ENCODE measurements at regions of chr9 and their contacts with region 1.

Region 1: DNA sequence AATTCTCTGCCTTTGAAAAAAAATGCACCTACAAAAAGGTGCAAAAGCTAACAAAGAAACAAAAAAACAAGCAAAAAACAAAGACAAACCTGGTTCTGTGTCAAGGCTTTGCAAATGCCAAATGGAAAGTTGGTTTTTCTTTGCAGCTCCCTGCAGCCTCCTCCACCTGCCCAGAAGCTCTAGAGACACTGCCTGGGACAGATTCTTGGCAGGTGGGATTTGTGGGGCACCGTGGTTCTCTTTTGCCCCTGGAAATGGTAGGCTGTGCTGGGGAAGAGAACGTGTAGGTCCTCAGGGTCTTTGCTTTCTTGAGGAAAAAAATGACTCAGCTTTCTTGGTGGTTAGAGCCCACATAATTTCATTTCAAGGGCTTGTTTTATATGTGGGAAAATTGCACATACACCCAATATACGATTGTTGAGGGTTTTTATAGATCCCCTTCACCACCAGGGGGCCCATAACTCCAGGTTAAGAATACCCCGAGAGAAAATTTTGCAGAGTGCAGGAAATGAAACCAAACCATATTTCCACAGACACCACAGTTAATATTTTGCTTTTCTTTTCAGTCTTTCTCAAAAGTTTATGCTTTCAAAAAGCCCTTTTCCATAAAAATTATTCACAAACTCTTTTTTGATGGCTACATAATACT is 58.7 kb downstream of the NXNL2 start:
- DNase-seq: peak; percentile 88
- H3K4me3 Mint-ChIP-seq: no peak overlapping the region
- H3K27ac Mint-ChIP-seq: no peak overlapping the region
- H3K4me1 Mint-ChIP-seq: peaks cover 2% of the 10 kb centered on the region
- H3K27me3 Mint-ChIP-seq: peaks cover 18% of the 10 kb centered on the region

Region 2: GRCh38 chr9:88741335-88741734 is 147.7 kb after region 1 on chr9:
- intact Hi-C with region 1: loop called (anchors 2 kb)
- DNase-seq: peak; percentile 68
- H3K4me3 Mint-ChIP-seq: no peak overlapping the region
- H3K27ac Mint-ChIP-seq: no peak overlapping the region
- H3K4me1 Mint-ChIP-seq: no peaks in the 10 kb centered on the region
- H3K27me3 Mint-ChIP-seq: peaks cover 12% of the 10 kb centered on the region

Region 3: DNA sequence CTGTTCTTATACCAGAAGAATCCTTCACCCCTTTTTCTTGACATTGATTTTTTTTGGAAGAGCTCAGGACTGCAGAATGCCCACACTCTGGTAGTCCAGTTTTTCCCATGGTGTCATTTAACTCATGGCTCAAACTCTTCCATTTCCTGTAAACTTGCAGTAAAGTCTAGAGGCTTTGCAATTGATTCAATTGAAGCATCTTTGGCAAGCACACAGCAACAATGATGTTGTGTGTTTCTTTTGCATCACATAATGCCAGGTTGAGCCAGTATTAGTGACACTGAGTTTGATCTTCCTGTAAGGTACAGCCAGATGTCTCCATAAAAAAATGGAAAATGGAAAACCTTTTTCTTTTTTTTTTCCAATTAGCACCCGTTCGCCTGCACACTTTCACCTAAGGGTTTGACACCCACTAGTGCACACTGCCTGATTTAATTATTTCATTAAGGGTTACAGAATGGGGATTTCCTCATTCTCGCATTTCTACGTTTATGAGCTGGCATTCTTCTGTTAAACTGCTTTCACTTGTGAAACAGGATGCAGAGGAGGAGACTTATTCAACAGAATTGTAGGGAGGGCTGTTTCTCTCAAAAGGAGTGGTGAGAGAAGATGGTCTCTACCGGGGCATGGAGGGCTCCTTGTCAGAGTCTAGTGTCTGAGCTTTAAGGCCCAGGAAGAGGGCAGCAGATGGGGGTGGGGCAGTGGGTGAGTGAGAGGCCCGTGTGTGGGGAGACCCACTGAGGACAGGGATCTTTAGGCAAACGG is 395.3 kb after region 1 on chr9:
- intact Hi-C with region 1: loop called (anchors 5 kb)
- DNase-seq: peak; percentile 75
- H3K4me3 Mint-ChIP-seq: peak overlapping the region; percentile 74
- H3K27ac Mint-ChIP-seq: peak overlapping the region; percentile 83
- H3K4me1 Mint-ChIP-seq: peaks cover 22% of the 10 kb centered on the region
- H3K27me3 Mint-ChIP-seq: peaks cover 41% of the 10 kb centered on the region

Region 4: DNA sequence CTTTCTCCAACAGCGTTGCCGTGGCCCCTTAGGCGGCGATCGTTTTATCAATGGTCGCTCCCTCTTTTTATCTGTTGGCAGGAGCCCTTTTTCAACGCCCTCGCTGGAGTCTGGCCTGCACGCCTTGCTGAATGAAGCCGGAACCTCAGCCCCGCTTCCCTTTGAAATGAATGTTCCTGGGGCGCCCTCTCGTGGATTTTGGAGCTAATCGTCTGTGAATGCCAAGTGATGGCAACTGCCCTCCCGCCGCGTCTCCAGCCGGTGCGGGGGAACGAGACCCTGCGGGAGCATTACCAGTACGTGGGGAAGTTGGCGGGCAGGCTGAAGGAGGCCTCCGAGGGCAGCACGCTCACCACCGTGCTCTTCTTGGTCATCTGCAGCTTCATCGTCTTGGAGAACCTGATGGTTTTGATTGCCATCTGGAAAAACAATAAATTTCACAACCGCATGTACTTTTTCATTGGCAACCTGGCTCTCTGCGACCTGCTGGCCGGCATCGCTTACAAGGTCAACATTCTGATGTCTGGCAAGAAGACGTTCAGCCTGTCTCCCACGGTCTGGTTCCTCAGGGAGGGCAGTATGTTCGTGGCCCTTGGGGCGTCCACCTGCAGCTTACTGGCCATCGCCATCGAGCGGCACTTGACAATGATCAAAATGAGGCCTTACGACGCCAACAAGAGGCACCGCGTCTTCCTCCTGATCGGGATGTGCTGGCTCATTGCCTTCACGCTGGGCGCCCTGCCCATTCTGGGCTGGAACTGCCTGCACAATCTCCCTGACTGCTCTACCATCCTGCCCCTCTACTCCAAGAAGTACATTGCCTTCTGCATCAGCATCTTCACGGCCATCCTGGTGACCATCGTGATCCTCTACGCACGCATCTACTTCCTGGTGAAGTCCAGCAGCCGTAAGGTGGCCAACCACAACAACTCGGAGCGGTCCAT is 407.6 kb after region 1 on chr9:
- intact Hi-C with region 1: loop called (anchors 1 kb)
- DNase-seq: peak; percentile 93
- H3K4me3 Mint-ChIP-seq: no peak overlapping the region
- H3K27ac Mint-ChIP-seq: no peak overlapping the region
- H3K4me1 Mint-ChIP-seq: peaks cover 4% of the 10 kb centered on the region
- H3K27me3 Mint-ChIP-seq: peaks cover 18% of the 10 kb centered on the region

Region 5: DNA sequence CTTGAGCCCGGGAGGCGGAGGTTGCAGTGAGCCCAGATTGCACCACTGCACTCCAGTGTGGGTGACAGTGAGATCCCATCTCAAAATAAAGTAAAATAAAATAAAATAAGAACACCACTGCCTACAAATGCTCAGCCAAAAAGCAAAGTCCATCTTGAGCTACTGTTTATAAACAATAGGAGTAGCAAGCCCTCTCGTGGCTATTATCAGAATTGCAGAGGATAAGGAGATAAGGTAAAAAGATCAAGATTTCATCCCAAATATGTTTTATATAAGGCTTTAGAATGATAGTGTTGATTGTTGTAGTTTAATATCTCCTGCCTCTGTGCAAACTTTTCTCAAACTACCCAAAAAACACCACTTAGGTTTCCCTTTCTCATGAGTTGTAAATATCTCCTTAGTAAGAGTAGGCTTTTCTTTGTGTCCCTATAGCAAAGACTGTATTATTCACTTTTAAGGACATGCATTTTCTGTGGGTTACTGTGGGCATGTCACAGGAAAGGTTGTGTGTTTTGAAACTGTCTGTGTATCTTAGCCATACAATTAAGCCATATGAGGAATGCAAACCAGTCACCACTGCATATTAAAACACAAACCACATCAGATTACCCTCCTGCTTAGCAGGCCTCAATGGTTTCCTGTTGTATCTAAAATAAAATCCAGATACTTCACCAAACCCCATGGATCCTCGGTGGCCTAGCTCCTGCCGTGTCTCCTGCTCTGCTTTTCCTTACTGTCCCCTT is 685.5 kb after region 1 on chr9:
- intact Hi-C with region 1: loop called (anchors 10 kb)
- DNase-seq: peak; percentile 75
- H3K4me3 Mint-ChIP-seq: no peak overlapping the region
- H3K27ac Mint-ChIP-seq: no peak overlapping the region
- H3K4me1 Mint-ChIP-seq: peaks cover 21% of the 10 kb centered on the region
- H3K27me3 Mint-ChIP-seq: peaks cover 7% of the 10 kb centered on the region

Region 6: GRCh38 chr9:89597711-89598625 is 1004.3 kb after region 1 on chr9:
- intact Hi-C with region 1: no loop called
- DNase-seq: peak; percentile 90
- H3K4me3 Mint-ChIP-seq: no peak overlapping the region
- H3K27ac Mint-ChIP-seq: no peak overlapping the region
- H3K4me1 Mint-ChIP-seq: peaks cover 2% of the 10 kb centered on the region
- H3K27me3 Mint-ChIP-seq: peaks cover 34% of the 10 kb centered on the region